Activated B cell treated with CpG ODN at 0.5 μM for 24 hours (primary cell): ENCODE measurements at regions of chr17 and their contacts with region 1.

Region 1: GRCh38 chr17:8118769-8119580 is 661 bp upstream of the ALOXE3 start:
- DNase-seq: peak; percentile 81
- ATAC-seq: peak; percentile 68
- H3K4me3 Mint-ChIP-seq: peak overlapping the region; percentile 93
- H3K27ac Mint-ChIP-seq: peak overlapping the region; percentile 96
- H3K4me1 Mint-ChIP-seq: peaks cover 58% of the 10 kb centered on the region
- H3K27me3 Mint-ChIP-seq: peaks cover 56% of the 10 kb centered on the region
- CTCF ChIP-seq: peak; percentile 26

Region 2: DNA sequence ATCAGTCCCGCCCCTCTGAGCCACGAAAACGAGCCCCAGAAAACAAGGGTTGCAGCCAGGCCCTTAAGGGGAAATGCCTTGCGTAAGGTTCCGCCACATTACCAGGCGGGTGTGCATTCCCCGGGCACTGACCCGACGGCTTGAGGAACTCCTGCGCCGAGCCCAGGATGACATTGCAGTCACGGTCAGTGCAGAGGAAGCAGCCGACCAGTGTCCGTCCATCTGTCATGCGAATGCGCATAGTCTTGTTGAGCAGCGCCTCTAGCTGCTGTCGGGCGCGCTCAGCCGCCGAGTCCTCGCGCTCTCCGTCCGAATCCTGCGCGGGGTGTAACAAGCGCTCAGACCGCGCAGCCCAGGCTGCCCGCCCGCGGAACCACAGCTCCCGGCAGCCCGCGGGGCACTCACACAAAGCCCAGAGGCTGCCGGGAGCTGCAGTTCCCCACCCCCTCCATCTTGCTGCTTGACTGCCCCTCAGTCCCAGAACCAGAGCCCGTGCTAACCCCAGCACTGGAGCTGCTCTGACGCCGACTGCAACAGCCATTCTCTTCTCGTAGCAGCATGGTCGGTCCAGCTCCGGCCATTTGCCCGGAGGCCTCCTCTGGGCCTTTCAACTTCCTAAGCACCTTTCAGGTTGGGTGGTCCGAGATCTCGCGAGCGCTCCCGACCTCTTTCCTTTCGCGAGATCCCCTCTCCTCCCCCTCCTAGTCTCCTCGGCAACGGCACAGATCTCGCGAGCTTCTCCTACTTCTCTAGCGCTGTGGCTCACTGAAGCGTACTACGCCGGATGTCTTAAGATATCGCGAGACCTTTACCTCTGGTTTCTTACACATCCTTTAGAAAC is 261.9 kb before region 1 on chr17 and contains the start of gene NAA38:
- CTCF ChIA-PET with region 1: no interaction called
- POLR2A ChIA-PET with region 1: interaction called, 3 read pairs
- intact Hi-C with region 1: loop called (anchors 1 kb)
- DNase-seq: peak; percentile 88
- ATAC-seq: peak; percentile 83
- H3K4me3 Mint-ChIP-seq: no peak within 1 kb of the TSS
- H3K27ac Mint-ChIP-seq: no peak within 1 kb of the TSS
- H3K4me1 Mint-ChIP-seq: peaks cover 5% of the 10 kb centered on the region
- H3K27me3 Mint-ChIP-seq: no peaks in the 10 kb centered on the region
- CTCF ChIP-seq: no peak
- total RNA-seq, gene NAA38: 36.0 and 47.9 TPM in 2 replicates

Region 3: DNA sequence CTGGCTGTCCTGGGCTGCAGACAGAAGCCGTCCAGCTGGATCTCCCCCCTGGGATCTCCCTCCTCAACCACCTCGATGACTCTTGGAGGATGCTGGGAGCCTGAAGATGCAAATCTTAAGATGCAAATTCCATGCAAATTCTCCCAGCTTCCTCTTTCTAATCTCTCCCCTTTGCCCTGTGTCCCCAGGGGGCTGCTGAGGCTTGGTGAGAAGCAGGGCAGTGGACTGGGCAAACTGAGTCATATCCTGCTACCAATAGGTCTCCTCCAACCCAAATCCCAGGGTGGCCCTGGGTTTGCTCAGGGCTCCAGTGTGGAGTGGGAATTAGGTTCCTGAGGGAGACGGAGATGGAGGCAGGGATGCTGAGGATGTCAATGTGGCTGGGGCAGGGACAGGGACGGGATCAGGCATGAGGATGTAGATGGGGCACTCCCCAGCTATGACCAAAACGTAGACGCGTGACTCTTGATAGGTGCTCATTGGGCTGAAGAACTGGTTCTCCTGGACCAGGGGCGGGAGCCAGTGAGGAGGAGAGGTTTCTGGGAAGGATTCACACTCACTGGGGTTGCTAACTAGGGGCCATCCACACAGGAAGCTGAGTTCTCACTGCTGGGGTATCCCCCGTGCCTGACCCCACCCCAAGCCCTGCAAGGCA is 27.8 kb before region 1 on chr17:
- CTCF ChIA-PET with region 1: interaction called, 34 read pairs
- POLR2A ChIA-PET with region 1: interaction called, 46 read pairs
- intact Hi-C with region 1: loop called (anchors 1 kb)
- DNase-seq: peak; percentile 71
- ATAC-seq: peak; percentile 90
- H3K4me3 Mint-ChIP-seq: peak overlapping the region; percentile 80
- H3K27ac Mint-ChIP-seq: peak overlapping the region; percentile 95
- H3K4me1 Mint-ChIP-seq: peaks cover 46% of the 10 kb centered on the region
- H3K27me3 Mint-ChIP-seq: peaks cover 7% of the 10 kb centered on the region
- CTCF ChIP-seq: no peak

Region 4: DNA sequence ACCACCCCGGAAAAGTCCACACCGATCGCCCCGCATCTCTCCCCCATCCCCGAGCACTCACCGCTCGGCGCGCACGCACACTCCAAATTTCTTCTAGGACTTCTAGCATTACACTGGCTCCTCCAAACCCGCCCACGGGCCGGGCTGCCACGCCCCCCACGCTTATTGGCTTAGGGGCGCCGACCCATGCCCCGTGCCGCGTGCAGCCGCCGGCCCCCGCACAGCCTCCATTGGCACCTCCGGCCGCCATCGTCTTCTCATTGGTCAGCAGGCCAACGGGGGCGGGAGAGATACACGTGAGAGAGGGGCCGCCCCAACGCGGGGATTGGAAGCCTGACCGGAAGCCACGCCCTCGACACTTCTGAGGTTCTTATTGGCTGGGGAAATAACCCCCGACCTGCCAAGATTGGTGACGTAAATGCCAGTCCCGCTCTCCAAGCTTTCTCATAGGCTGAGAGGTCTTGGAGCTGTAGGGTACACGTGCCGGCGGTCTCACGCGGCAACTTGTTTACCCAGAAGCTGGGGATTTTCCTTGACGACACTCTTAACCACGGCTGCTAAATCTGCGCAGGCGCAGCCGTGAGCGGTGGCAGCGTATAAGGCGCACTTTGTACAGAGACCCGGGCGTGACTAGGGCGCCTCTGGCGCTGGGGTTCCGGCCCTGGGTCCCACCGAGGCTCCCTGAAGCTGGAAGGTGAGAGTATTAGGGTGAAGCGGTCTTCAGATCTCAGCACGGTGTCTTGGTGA is 37.4 kb after region 1 on chr17:
- CTCF ChIA-PET with region 1: interaction called, 14 read pairs
- POLR2A ChIA-PET with region 1: interaction called, 30 read pairs
- intact Hi-C with region 1: loop called (anchors 1 kb)
- DNase-seq: peak; percentile 98
- ATAC-seq: peak; percentile 82
- H3K4me3 Mint-ChIP-seq: no peak overlapping the region
- H3K27ac Mint-ChIP-seq: no peak overlapping the region
- H3K4me1 Mint-ChIP-seq: peaks cover 48% of the 10 kb centered on the region
- H3K27me3 Mint-ChIP-seq: no peaks in the 10 kb centered on the region
- CTCF ChIP-seq: no peak

Region 5: GRCh38 chr17:8288336-8289102 is 169.5 kb after region 1 on chr17 and contains the start of gene RANGRF:
- CTCF ChIA-PET with region 1: no interaction called
- POLR2A ChIA-PET with region 1: interaction called, 5 read pairs
- intact Hi-C with region 1: loop called (anchors 2 kb)
- DNase-seq: peak; percentile 77
- ATAC-seq: peak; percentile 93
- H3K4me3 Mint-ChIP-seq: peak within 1 kb of the TSS; percentile 98
- H3K27ac Mint-ChIP-seq: peak within 1 kb of the TSS; percentile 97
- H3K4me1 Mint-ChIP-seq: peaks cover 51% of the 10 kb centered on the region
- H3K27me3 Mint-ChIP-seq: no peaks in the 10 kb centered on the region
- CTCF ChIP-seq: no peak
- total RNA-seq, gene RANGRF: 50.1 and 50.9 TPM in 2 replicates

Region 6: GRCh38 chr17:8383143-8383822 is 264.3 kb after region 1 on chr17 and contains the start of gene RPL26:
- CTCF ChIA-PET with region 1: no interaction called
- POLR2A ChIA-PET with region 1: interaction called, 3 read pairs
- intact Hi-C with region 1: loop called (anchors 1 kb)
- DNase-seq: peak; percentile 94
- ATAC-seq: peak; percentile 90
- H3K4me3 Mint-ChIP-seq: peak within 1 kb of the TSS; percentile 98
- H3K27ac Mint-ChIP-seq: peak within 1 kb of the TSS; percentile 95
- H3K4me1 Mint-ChIP-seq: peaks cover 56% of the 10 kb centered on the region
- H3K27me3 Mint-ChIP-seq: no peaks in the 10 kb centered on the region
- CTCF ChIP-seq: peak; percentile 87
- total RNA-seq, gene RPL26: 3,512 and 4,174 TPM in 2 replicates